T-cell (primary cell): ENCODE measurements at regions of chr18 and their contacts with region 1.

Region 1: GRCh38 chr18:58768293-58768974 is 96.2 kb upstream of the ZNF532 start:
- DNase-seq: peak; percentile 19 to 75 (median 56)
- ATAC-seq: peak; percentile 86 to 90 (median 89)
- H3K4me3 ChIP-seq: peak overlapping the region; percentile 21 to 27
- H3K4me3 Mint-ChIP-seq: peak overlapping the region; percentile 41 to 70 (median 43)
- H3K27ac ChIP-seq: no peak overlapping the region
- H3K27ac Mint-ChIP-seq: no peak overlapping the region
- H3K4me1 ChIP-seq: peaks cover 0 to 16% of the 10 kb centered on the region in 2 experiments
- H3K4me1 Mint-ChIP-seq: peaks cover 12 to 19% (median 13%) of the 10 kb centered on the region in 3 donors
- H3K27me3 ChIP-seq: peaks cover 0 to 47% of the 10 kb centered on the region in 2 experiments
- H3K27me3 Mint-ChIP-seq: peaks cover 47 to 48% of the 10 kb centered on the region in 2 donors

Region 2: DNA sequence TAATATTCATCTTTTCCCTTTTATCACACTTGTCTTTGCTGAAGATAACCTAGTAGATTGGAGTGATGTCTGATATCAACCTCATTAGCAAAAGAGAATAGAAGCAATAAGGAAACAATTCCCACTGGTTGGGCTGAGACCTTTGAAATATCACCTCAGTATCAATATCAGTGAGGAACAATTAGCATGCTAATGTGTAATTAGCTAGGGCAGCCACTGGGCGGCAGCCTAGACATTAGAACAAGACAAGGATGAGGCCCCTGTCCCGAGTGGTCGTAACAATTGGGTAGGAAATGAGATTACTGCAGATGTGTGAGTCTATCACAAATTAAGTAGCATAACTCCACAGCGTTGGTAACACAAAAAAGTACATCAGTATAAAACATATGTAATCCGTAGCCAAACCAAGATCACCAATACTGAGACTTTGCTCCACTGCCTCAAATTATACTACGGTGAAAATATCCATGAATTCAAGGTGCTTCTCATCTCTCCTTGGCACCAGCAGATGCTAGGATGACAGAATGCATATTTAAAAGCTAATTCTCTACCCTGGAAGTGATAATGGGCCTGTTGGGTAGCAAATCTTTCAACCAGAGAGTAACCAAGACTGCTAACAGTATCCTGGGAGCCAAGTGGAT is 238.6 kb before region 1 on chr18:
- CTCF ChIA-PET with region 1: interaction called, 72 to 177 read pairs
- POLR2A ChIA-PET with region 1: interaction called in 1 of 2 experiments, 4 read pairs
- DNase-seq: peak; percentile 40 to 77 (median 62)
- ATAC-seq: peak; percentile 67 to 83 (median 78)
- H3K4me3 ChIP-seq: no peak overlapping the region
- H3K4me3 Mint-ChIP-seq: no peak overlapping the region
- H3K27ac ChIP-seq: no peak overlapping the region
- H3K27ac Mint-ChIP-seq: no peak overlapping the region
- H3K4me1 ChIP-seq: no peaks in the 10 kb centered on the region
- H3K4me1 Mint-ChIP-seq: peaks cover 7 to 10% (median 8%) of the 10 kb centered on the region in 3 donors
- H3K27me3 ChIP-seq: peaks cover 0 to 9% of the 10 kb centered on the region in 2 experiments
- H3K27me3 Mint-ChIP-seq: peaks cover 3 to 6% of the 10 kb centered on the region in 2 donors

Region 3: GRCh38 chr18:58541789-58542425 is 226.5 kb before region 1 on chr18:
- CTCF ChIA-PET with region 1: interaction called, 8 to 14 read pairs
- POLR2A ChIA-PET with region 1: no interaction called
- DNase-seq: peak in 14 of 35 experiments; percentile 5 to 67 (median 16)
- ATAC-seq: peak; percentile 79 to 83 (median 80)
- H3K4me3 ChIP-seq: no peak overlapping the region
- H3K4me3 Mint-ChIP-seq: no peak overlapping the region
- H3K27ac ChIP-seq: no peak overlapping the region
- H3K27ac Mint-ChIP-seq: peak overlapping the region; percentile 64 to 71
- H3K4me1 ChIP-seq: peaks cover 2 to 14% of the 10 kb centered on the region in 2 experiments
- H3K4me1 Mint-ChIP-seq: peaks cover 27 to 47% (median 33%) of the 10 kb centered on the region in 3 donors
- H3K27me3 ChIP-seq: peaks cover 0 to 3% of the 10 kb centered on the region in 2 experiments
- H3K27me3 Mint-ChIP-seq: no peaks in the 10 kb centered on the region

Region 4: GRCh38 chr18:58748899-58749595 is 19.4 kb before region 1 on chr18:
- CTCF ChIA-PET with region 1: interaction called, 8 to 13 read pairs
- POLR2A ChIA-PET with region 1: no interaction called
- DNase-seq: no peak
- ATAC-seq: no peak
- H3K4me3 ChIP-seq: peak overlapping the region in 1 of 2 donors; percentile 19
- H3K4me3 Mint-ChIP-seq: no peak overlapping the region
- H3K27ac ChIP-seq: no peak overlapping the region
- H3K27ac Mint-ChIP-seq: no peak overlapping the region
- H3K4me1 ChIP-seq: no peaks in the 10 kb centered on the region
- H3K4me1 Mint-ChIP-seq: peaks cover 0 to 6% (median 4%) of the 10 kb centered on the region in 3 donors
- H3K27me3 ChIP-seq: no peaks in the 10 kb centered on the region
- H3K27me3 Mint-ChIP-seq: no peaks in the 10 kb centered on the region